ENCODE measurements at regions of chr11 and their contacts with region 1.

Region 1: DNA sequence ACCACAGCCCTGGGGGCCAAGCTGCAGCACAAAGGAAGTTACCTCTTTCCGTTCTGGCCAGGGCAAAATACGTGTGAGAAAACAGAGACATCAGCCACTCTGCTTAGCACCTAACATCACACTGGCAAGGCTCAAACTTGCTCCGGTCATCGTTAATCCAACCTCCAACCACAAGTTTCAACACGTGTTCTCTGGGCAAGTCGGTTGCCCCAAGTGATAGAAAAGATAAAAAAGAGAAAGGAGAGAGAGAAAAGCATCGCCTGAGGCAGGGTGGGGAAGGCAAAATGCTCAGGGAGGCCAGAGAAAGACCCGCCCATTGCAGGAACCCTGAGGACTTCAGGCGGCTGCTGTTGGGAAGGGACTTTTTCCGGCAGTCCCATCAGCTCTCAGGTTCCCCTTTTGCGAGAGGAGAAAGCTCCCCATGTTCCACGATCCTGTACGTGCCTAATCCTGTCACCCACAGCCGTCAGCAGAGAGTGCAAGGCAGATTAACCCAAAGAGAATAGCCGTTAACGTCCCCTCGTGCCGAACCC is 18.5 kb upstream of the B4GALNT4 start:
- DNase-seq: peak; percentile 54
- H3K4me3 ChIP-seq: no peak overlapping the region
- H3K27ac ChIP-seq: peak overlapping the region; percentile 52
- H3K4me1 ChIP-seq: peaks cover 72% of the 10 kb centered on the region
- CTCF ChIP-seq: no peak

Region 2: DNA sequence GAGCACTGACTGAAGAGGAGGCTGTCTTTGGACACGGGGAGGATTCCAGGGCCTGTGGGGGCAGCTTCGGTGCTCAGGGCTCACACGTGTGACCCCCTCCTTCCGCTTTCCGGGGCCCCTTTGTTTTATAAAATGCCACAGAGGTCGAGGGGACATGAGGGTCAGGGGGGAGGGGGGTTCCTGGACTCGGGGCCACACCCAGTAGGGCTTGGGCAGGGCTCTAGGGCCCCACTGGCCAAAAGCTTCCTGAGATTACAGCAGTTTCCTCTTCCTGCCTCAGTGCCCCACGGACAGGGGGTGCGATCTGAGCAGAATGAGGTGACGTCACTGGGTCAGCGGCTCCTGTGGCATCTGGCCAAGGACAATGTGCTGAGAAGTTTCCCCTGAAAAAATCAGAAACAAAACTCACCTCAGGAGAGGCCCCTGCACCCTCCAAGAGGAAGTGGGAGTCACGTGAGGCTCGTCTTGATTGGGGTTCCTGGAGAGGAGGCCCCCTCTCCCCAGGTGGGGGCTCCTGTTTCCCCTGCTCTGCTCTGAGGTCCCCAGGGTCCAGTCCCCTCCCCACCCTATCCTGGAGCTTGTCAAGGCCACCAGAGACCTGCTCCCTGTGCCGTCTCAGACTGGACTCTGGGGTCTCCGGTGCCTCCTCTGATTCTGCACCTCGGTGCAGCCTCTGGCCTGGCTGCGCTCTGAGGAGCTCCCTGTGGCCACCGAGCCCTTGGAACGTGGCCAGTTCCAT is 23.8 kb before region 1 on chr11:
- CTCF ChIA-PET with region 1: interaction called, 4 read pairs
- POLR2A ChIA-PET with region 1: interaction called, 20 read pairs
- intact Hi-C with region 1: loop called (anchors 1 kb)
- DNase-seq: peak; percentile 81
- H3K4me3 ChIP-seq: peak overlapping the region; percentile 44
- H3K27ac ChIP-seq: peak overlapping the region; percentile 75
- H3K4me1 ChIP-seq: peaks cover 61% of the 10 kb centered on the region
- CTCF ChIP-seq: no peak; the same call in 1 of the 2 replicates

Region 3: GRCh38 chr11:460331-461199 is 109.8 kb after region 1 on chr11:
- CTCF ChIA-PET with region 1: no interaction called
- POLR2A ChIA-PET with region 1: no interaction called
- intact Hi-C with region 1: no loop called
- DNase-seq: no peak
- H3K4me3 ChIP-seq: no peak overlapping the region
- H3K27ac ChIP-seq: no peak overlapping the region
- H3K4me1 ChIP-seq: no peaks in the 10 kb centered on the region
- CTCF ChIP-seq: no peak